Mammary epithelial cell (primary cell): ENCODE measurements at regions of chr10 and their contacts with region 1.

Region 1: DNA sequence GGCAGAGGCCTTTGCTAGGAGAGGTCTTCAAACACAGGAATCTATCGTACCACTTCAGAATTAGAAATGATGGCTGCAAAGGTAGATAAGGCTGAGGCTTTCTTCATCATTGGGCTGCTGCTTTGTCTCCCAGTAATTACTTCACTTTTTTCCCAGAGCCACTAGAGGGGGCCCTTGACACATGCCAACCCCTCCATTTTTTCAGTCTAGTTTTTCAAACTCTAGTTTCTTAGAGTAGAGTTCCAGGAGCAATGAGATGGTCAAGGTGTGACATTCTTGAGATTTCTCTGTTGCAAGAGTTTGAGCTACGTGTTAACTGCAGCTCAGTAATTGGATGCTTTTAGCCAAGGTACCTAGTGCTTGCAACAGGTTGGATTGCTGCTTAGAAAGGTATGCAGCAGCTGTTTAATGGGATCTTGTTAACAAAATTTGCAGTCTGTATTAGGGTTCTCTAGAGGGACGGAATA is 33.8 kb upstream of the RBM20 start:
- DNase-seq: peak; percentile 46
- H3K4me3 ChIP-seq: no peak overlapping the region
- H3K27ac ChIP-seq: no peak overlapping the region
- H3K4me1 ChIP-seq: peaks cover 9% of the 10 kb centered on the region
- H3K27me3 ChIP-seq: no peaks in the 10 kb centered on the region
- CTCF ChIP-seq: peak; percentile 89 to 90

Region 2: DNA sequence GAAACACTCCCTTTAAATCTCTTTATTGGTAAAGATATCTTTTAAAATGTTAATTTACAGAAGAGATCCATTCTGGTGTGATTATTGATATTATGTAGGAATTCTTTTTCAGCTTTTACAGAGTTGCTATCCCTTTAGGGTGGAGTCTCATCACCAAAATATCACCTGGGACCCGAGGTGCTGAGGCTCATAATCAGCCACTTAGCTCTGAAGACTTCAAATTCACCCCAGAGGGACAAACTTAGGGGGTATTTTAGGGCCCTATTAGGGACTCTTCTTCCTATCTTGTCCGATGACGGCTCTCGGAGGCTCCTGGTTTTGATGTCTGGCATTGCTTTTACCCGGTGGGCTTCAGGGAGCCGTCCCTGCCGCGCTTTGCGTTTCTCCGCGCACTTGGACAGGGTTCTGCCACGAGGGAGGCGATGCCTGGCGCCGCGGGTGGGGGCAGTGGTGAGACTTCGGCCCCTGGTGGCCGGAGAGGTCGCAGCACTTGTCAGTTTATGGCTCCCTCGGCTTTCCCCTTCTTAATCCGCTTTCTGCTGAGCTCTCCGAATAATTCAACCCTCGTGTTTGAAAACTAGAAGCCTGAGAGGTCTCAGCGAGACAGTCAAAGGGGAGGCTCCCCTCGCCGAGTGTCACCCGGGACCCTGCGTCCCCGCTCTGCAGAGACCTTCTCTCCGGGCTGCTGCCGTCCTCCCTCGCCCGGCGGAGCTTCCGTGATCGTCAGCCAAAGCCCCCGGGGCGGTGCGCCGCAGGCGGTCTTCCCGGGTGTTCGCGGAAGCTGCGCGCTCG is 61.6 kb after region 1 on chr10:
- CTCF ChIA-PET with region 1: interaction called, 6 read pairs
- dilution Hi-C with region 1: no loop called
- in situ Hi-C with region 1: no loop called
- intact Hi-C with region 1: loop called (anchors 1 kb)
- DNase-seq: peak; percentile 50
- H3K4me3 ChIP-seq: peak overlapping the region; percentile 54 to 76 (median 63)
- H3K27ac ChIP-seq: no peak overlapping the region
- H3K4me1 ChIP-seq: peaks cover 4% of the 10 kb centered on the region
- H3K27me3 ChIP-seq: no peaks in the 10 kb centered on the region
- CTCF ChIP-seq: peak; percentile 76 to 90

Region 3: GRCh38 chr10:110681023-110681681 is 70.8 kb after region 1 on chr10:
- CTCF ChIA-PET with region 1: no interaction called
- dilution Hi-C with region 1: no loop called
- in situ Hi-C with region 1: no loop called
- intact Hi-C with region 1: loop called (anchors 1 kb)
- DNase-seq: no peak
- H3K4me3 ChIP-seq: no peak overlapping the region
- H3K27ac ChIP-seq: no peak overlapping the region
- H3K4me1 ChIP-seq: peaks cover 8% of the 10 kb centered on the region
- H3K27me3 ChIP-seq: no peaks in the 10 kb centered on the region
- CTCF ChIP-seq: no peak

Region 4: GRCh38 chr10:110893559-110894179 is 283.3 kb after region 1 on chr10:
- CTCF ChIA-PET with region 1: no interaction called
- dilution Hi-C with region 1: no loop called
- in situ Hi-C with region 1: loop called in 1 of 2 experiments (anchors 25 kb)
- intact Hi-C with region 1: loop called (anchors 1 kb)
- DNase-seq: peak; percentile 28
- H3K4me3 ChIP-seq: no peak overlapping the region
- H3K27ac ChIP-seq: no peak overlapping the region
- H3K4me1 ChIP-seq: peaks cover 3% of the 10 kb centered on the region
- H3K27me3 ChIP-seq: no peaks in the 10 kb centered on the region
- CTCF ChIP-seq: peak; percentile 43 to 52

Region 5: GRCh38 chr10:111360260-111360925 is 750.1 kb after region 1 on chr10:
- CTCF ChIA-PET with region 1: no interaction called
- dilution Hi-C with region 1: no loop called
- in situ Hi-C with region 1: no loop called
- intact Hi-C with region 1: loop called (anchors 1 kb)
- DNase-seq: peak; percentile 19
- H3K4me3 ChIP-seq: no peak overlapping the region
- H3K27ac ChIP-seq: no peak overlapping the region
- H3K4me1 ChIP-seq: no peaks in the 10 kb centered on the region
- H3K27me3 ChIP-seq: no peaks in the 10 kb centered on the region
- CTCF ChIP-seq: peak; percentile 16 to 62